ENCODE measurements at regions of chr11 and their contacts with region 1.

Region 1: DNA sequence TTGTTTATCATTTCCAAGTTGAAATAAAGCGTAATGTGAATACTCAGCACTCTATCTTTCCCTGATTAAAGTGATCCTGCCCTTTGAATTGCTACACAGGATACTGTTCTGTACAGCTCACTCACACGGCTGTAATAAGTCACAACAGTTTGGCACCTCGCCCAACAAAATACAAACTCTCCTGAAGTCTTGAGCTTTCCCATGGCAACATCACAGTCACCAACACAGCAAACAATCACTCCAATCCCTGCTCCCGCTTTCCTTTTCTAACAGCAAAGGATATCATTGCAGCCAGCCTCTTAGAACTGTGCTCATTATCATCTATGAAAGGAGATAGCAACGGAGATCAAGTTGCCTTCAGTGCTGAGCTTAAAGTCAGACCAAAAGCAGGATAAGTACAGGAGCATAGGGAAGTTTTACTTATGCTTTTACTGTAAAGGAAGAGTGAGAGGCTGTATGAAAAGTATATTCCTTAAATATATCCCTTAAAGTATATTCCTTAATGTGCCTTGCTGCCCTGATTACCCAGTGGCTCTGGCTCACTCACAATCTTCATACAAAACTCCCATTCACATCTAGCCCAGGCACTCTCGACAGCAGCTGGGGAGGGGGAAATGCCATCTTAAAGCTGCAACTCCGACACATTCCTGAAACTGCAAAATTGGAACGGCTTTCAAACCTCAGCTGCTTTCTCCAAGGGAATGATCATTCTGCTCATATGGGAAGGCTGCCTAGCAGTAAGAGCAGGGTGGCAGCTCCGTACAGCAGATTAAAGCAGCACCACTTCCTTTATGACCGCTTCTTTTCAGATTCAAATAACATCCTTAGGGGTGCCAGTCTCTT is 35.8 kb downstream of the MAML2 start:
- DNase-seq: no peak
- H3K4me3 Mint-ChIP-seq: peak overlapping the region; percentile 35
- H3K27ac Mint-ChIP-seq: no peak overlapping the region
- H3K4me1 Mint-ChIP-seq: peaks cover 34% of the 10 kb centered on the region
- H3K27me3 Mint-ChIP-seq: no peaks in the 10 kb centered on the region

Region 2: GRCh38 chr11:96267496-96268032 is 39.6 kb before region 1 on chr11:
- intact Hi-C with region 1: no loop called
- DNase-seq: no peak
- H3K4me3 Mint-ChIP-seq: peak overlapping the region; percentile 43
- H3K27ac Mint-ChIP-seq: peak overlapping the region; percentile 57
- H3K4me1 Mint-ChIP-seq: peaks cover 78% of the 10 kb centered on the region
- H3K27me3 Mint-ChIP-seq: no peaks in the 10 kb centered on the region

Region 3: GRCh38 chr11:96293598-96294021 is 13.5 kb before region 1 on chr11:
- intact Hi-C with region 1: loop called (anchors 1 kb)
- DNase-seq: no peak
- H3K4me3 Mint-ChIP-seq: no peak overlapping the region
- H3K27ac Mint-ChIP-seq: no peak overlapping the region
- H3K4me1 Mint-ChIP-seq: peaks cover 44% of the 10 kb centered on the region
- H3K27me3 Mint-ChIP-seq: no peaks in the 10 kb centered on the region

Region 4: DNA sequence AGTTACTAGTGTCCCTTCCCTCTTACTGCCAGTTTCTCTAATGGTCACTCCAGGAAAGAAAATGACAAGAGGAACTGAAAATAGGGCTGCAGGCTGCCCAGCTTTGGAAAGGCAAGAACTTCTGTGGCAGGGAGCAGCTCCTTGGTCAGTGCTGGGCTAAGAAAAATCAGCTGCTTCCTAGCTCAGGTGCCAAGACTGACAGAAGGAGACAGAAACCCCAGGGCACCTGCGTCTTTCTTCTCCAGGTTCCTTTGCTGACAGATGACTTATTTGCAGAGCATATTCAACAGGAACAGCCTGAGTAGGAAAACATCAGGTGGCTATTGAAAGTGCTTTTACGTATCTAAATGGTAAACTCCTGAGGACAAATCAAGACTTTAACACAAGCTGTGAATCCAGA is 10.4 kb after region 1 on chr11:
- intact Hi-C with region 1: no loop called
- DNase-seq: no peak
- H3K4me3 Mint-ChIP-seq: no peak overlapping the region
- H3K27ac Mint-ChIP-seq: no peak overlapping the region
- H3K4me1 Mint-ChIP-seq: peaks cover 58% of the 10 kb centered on the region
- H3K27me3 Mint-ChIP-seq: no peaks in the 10 kb centered on the region

Region 5: GRCh38 chr11:96328395-96329010 is 21.3 kb after region 1 on chr11:
- intact Hi-C with region 1: loop called (anchors 2 kb)
- DNase-seq: no peak
- H3K4me3 Mint-ChIP-seq: no peak overlapping the region
- H3K27ac Mint-ChIP-seq: no peak overlapping the region
- H3K4me1 Mint-ChIP-seq: peaks cover 57% of the 10 kb centered on the region
- H3K27me3 Mint-ChIP-seq: no peaks in the 10 kb centered on the region

Region 6: DNA sequence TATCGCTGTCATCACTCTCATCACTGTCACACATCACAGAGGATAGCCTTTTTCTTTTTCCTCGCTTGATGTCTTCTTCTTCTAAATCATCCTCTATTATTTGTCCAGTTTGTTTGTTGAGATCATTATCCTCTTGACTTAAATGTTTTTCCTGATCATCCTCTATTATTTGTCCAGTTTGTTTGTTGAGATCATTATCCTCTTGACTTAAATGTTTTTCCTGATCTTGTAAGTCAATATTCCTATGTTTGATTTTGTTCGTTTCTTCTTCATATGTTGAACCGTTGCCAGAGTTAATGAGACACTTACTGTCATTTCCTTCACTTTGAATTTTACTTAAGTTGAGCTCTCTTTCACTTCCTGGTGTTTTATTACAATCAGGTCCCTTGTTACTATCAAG is 77.0 kb after region 1 on chr11:
- intact Hi-C with region 1: no loop called
- DNase-seq: no peak
- H3K4me3 Mint-ChIP-seq: peak overlapping the region; percentile 52
- H3K27ac Mint-ChIP-seq: peak overlapping the region; percentile 1
- H3K4me1 Mint-ChIP-seq: peaks cover 50% of the 10 kb centered on the region
- H3K27me3 Mint-ChIP-seq: no peaks in the 10 kb centered on the region